ENCODE measurements at regions of chr17 and their contacts with region 1.

Region 1: GRCh38 chr17:46147296-46147695 is 45.9 kb downstream of the KANSL1 start:
- DNase-seq: no peak
- H3K4me3 Mint-ChIP-seq: no peak overlapping the region
- H3K27ac Mint-ChIP-seq: no peak overlapping the region
- H3K4me1 Mint-ChIP-seq: peaks cover 38% of the 10 kb centered on the region
- H3K27me3 Mint-ChIP-seq: no peaks in the 10 kb centered on the region
- CTCF ChIP-seq: no peak

Region 2: GRCh38 chr17:46157443-46158062 is 10.3 kb after region 1 on chr17:
- CTCF ChIA-PET with region 1: interaction called, 4 read pairs
- POLR2A ChIA-PET with region 1: interaction called, 14 read pairs
- intact Hi-C with region 1: no loop called
- DNase-seq: no peak
- H3K4me3 Mint-ChIP-seq: peak overlapping the region; percentile 23
- H3K27ac Mint-ChIP-seq: peak overlapping the region; percentile 75
- H3K4me1 Mint-ChIP-seq: peaks cover 61% of the 10 kb centered on the region
- H3K27me3 Mint-ChIP-seq: no peaks in the 10 kb centered on the region
- CTCF ChIP-seq: no peak